Activated CD8-positive, alpha-beta T cell treated with anti-CD3 and anti-CD28 coated beads, Interleukin-2, amount 10 ng/mL, durations not matched to agents 7 days and 5 days (primary cell): ENCODE measurements at regions of chr15 and their contacts with region 1.

Region 1: GRCh38 chr15:85646538-85647091 is 148.1 kb downstream of the KLHL25 start:
- DNase-seq: peak; percentile 61
- ATAC-seq: peak; percentile 81
- H3K4me3 Mint-ChIP-seq: peak overlapping the region; percentile 34
- H3K27ac Mint-ChIP-seq: peak overlapping the region; percentile 64
- H3K4me1 Mint-ChIP-seq: peaks cover 41% of the 10 kb centered on the region
- H3K27me3 Mint-ChIP-seq: no peaks in the 10 kb centered on the region

Region 2: DNA sequence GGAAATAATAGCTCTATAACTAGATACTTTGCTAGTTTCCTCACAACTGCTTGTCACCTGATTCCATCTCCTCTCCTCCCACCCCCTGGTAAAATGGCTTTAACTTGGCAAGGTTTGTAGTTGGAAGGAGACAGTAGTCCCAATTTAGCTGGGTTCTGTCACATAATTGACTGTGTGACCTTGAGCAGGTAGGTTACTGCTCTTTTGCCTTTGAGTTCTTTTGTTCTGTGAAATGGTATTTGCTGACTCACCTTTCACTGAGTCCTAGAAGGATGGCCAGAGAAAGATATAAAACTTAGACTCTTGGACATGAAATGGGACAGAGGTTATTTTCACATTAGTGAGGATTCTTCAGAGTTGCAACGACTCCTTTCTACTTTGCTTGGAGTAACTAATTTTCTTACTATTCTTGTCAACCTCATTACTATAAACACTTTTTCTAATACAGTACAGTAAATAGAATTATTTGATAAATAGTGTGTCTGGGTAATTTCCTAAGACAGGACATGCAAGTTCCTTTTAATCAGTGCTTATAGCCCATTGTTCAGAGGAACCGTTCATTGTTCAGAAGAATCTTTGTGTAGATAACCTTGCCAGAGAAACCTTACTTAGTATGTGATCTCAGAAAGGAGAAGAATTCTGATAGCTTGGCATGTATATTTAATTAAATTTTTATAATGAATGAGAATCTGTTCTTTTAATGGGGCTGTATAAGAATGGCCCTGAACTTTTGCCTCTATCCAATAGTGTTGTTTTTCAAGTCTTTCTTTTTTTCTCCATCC is 251.9 kb before region 1 on chr15:
- CTCF ChIA-PET with region 1: no interaction called
- POLR2A ChIA-PET with region 1: no interaction called
- DNase-seq: no peak
- ATAC-seq: no peak
- H3K4me3 Mint-ChIP-seq: no peak overlapping the region
- H3K27ac Mint-ChIP-seq: no peak overlapping the region
- H3K4me1 Mint-ChIP-seq: peaks cover 10% of the 10 kb centered on the region
- H3K27me3 Mint-ChIP-seq: no peaks in the 10 kb centered on the region

Region 3: GRCh38 chr15:85534031-85534430 is 112.6 kb before region 1 on chr15:
- CTCF ChIA-PET with region 1: no interaction called
- POLR2A ChIA-PET with region 1: no interaction called
- DNase-seq: peak; percentile 31
- ATAC-seq: peak; percentile 95
- H3K4me3 Mint-ChIP-seq: peak overlapping the region; percentile 19
- H3K27ac Mint-ChIP-seq: peak overlapping the region; percentile 69
- H3K4me1 Mint-ChIP-seq: peaks cover 26% of the 10 kb centered on the region
- H3K27me3 Mint-ChIP-seq: no peaks in the 10 kb centered on the region

Region 4: GRCh38 chr15:85625856-85626255 is 20.8 kb before region 1 on chr15:
- CTCF ChIA-PET with region 1: interaction called, 13 read pairs
- POLR2A ChIA-PET with region 1: interaction called, 19 read pairs
- DNase-seq: peak; percentile 55
- ATAC-seq: peak; percentile 77
- H3K4me3 Mint-ChIP-seq: peak overlapping the region; percentile 64
- H3K27ac Mint-ChIP-seq: peak overlapping the region; percentile 60
- H3K4me1 Mint-ChIP-seq: peaks cover 60% of the 10 kb centered on the region
- H3K27me3 Mint-ChIP-seq: no peaks in the 10 kb centered on the region

Region 5: GRCh38 chr15:85681386-85681785 is 34.8 kb after region 1 on chr15:
- CTCF ChIA-PET with region 1: no interaction called
- POLR2A ChIA-PET with region 1: no interaction called
- DNase-seq: no peak
- ATAC-seq: no peak
- H3K4me3 Mint-ChIP-seq: no peak overlapping the region
- H3K27ac Mint-ChIP-seq: no peak overlapping the region
- H3K4me1 Mint-ChIP-seq: peaks cover 2% of the 10 kb centered on the region
- H3K27me3 Mint-ChIP-seq: no peaks in the 10 kb centered on the region